ENCODE measurements at regions of chr12 and their contacts with region 1.

Region 1: GRCh38 chr12:46124848-46125619 is 134.7 kb upstream of the SCAF11 start:
- DNase-seq: peak; percentile 87
- H3K4me3 Mint-ChIP-seq: peak overlapping the region; percentile 64
- H3K27ac Mint-ChIP-seq: peak overlapping the region; percentile 28
- H3K4me1 Mint-ChIP-seq: peaks cover 13% of the 10 kb centered on the region
- H3K27me3 Mint-ChIP-seq: peaks cover 16% of the 10 kb centered on the region
- CTCF ChIP-seq: peak; percentile 69

Region 2: DNA sequence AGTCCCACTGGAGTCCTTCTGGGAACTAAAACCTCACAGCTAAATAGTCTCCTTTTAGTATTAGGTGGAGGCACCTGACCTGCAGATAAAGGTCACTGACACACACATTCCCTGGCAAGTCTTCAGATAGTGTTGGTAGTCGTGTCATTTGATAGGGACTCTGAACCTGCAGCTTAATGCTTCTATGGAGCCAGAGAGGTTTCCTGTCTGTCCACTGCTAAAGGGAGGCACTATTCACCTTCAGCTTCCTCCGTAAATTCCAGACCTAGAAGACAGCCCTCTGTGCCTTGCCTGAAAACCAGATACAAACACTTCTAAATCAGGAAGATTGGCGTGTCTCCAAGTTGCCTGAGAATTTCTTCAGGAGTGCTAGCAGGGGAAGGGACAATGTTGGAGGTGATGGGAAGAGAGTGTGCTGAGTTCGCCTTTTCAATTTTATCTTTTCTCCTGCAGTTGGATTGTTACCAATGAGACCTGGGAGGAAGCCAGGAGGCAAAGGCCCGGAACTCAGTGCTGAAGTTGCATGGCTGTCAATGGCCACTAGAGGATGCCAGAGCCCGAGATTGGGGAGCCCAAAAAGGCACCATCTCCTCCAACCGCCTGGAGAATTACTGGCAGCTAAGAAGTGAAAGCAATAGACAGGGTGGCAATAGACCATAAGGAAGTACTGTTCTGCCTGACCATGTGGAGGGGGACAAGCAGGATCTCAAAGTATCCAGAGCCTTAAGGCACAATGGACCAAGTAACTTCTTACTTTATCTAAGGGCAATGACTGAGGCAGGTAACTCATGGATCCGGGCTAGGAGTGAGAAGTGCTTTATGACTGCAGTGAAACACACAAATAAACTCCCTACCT is 53.0 kb before region 1 on chr12:
- CTCF ChIA-PET with region 1: interaction called, 37 read pairs
- POLR2A ChIA-PET with region 1: interaction called, 4 read pairs
- intact Hi-C with region 1: no loop called
- DNase-seq: peak; percentile 87
- H3K4me3 Mint-ChIP-seq: no peak overlapping the region
- H3K27ac Mint-ChIP-seq: peak overlapping the region; percentile 47
- H3K4me1 Mint-ChIP-seq: peaks cover 20% of the 10 kb centered on the region
- H3K27me3 Mint-ChIP-seq: no peaks in the 10 kb centered on the region
- CTCF ChIP-seq: peak; percentile 95

Region 3: GRCh38 chr12:46357438-46358324 is 232.6 kb after region 1 on chr12:
- CTCF ChIA-PET with region 1: interaction called, 8 read pairs
- POLR2A ChIA-PET with region 1: interaction called, 18 read pairs
- intact Hi-C with region 1: loop called (anchors 1 kb)
- DNase-seq: peak; percentile 72
- H3K4me3 Mint-ChIP-seq: no peak overlapping the region
- H3K27ac Mint-ChIP-seq: peak overlapping the region; percentile 7
- H3K4me1 Mint-ChIP-seq: peaks cover 18% of the 10 kb centered on the region
- H3K27me3 Mint-ChIP-seq: no peaks in the 10 kb centered on the region
- CTCF ChIP-seq: no peak

Region 4: GRCh38 chr12:46983393-46984266 is 858.6 kb after region 1 on chr12:
- CTCF ChIA-PET with region 1: interaction called, 16 read pairs
- POLR2A ChIA-PET with region 1: interaction called, 3 read pairs
- intact Hi-C with region 1: no loop called
- DNase-seq: peak; percentile 72
- H3K4me3 Mint-ChIP-seq: no peak overlapping the region
- H3K27ac Mint-ChIP-seq: peak overlapping the region; percentile 28
- H3K4me1 Mint-ChIP-seq: peaks cover 13% of the 10 kb centered on the region
- H3K27me3 Mint-ChIP-seq: no peaks in the 10 kb centered on the region
- CTCF ChIP-seq: peak; percentile 90

Region 5: GRCh38 chr12:47021298-47021697 is 896.3 kb after region 1 on chr12:
- CTCF ChIA-PET with region 1: interaction called, 26 read pairs
- POLR2A ChIA-PET with region 1: no interaction called
- intact Hi-C with region 1: loop called (anchors 10 kb)
- DNase-seq: peak; percentile 86
- H3K4me3 Mint-ChIP-seq: no peak overlapping the region
- H3K27ac Mint-ChIP-seq: no peak overlapping the region
- H3K4me1 Mint-ChIP-seq: peaks cover 34% of the 10 kb centered on the region
- H3K27me3 Mint-ChIP-seq: no peaks in the 10 kb centered on the region
- CTCF ChIP-seq: peak; percentile 57

Measured in MCF 10A (cell line).